MCF 10A (cell line): ENCODE measurements at regions of chr20 and their contacts with region 1.

Region 1: DNA sequence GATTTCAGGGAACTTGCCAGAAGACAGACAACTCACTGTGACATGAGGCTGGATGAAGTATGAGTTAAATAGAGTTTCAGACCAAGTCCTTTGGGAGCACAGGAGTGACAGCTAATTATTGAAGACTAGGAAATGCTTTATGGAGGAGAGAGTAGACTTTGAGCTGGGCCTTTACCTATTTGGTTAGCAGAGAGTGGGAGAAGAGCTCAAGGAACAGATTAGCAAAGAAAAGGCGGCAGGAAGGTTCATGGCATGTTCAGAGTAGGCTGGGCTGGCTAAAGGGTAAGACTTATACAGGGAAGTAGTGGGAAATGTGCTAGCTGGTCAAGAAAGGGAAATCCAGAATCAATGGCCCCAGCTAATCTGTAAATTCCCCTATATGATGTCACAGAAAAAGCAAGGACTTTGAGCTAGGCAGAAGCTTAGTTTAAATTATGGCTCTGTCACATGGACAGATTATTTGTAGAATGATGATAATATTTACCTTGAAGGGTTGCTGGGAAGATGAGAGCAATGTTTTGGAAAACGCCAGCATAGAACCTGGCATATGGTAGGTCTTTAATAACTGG is 19.0 kb downstream of the CEP250 start:
- DNase-seq: no peak
- H3K4me3 Mint-ChIP-seq: no peak overlapping the region
- H3K27ac Mint-ChIP-seq: no peak overlapping the region
- H3K4me1 Mint-ChIP-seq: no peaks in the 10 kb centered on the region
- H3K27me3 Mint-ChIP-seq: no peaks in the 10 kb centered on the region
- CTCF ChIP-seq: no peak

Region 2: DNA sequence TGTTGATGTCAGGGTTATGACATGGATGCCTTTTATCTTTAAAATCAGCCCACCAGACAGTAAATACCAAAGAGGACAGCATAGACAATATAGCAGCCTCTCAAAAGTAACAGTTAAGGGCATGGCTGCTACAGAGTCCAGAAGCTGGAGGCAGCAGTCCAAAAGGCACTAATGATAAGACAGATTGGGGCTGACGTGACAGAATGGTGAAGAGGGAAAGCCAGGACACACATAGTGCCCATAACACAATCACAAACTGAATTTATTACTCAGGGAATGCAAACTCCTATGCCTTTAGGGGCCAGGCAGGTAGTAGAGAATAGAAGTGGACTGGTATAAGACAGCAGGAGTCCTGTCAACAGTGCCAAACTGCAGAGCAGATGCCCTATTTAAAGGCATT is 729.5 kb before region 1 on chr20:
- CTCF ChIA-PET with region 1: no interaction called
- POLR2A ChIA-PET with region 1: no interaction called
- intact Hi-C with region 1: no loop called
- DNase-seq: no peak
- H3K4me3 Mint-ChIP-seq: no peak overlapping the region
- H3K27ac Mint-ChIP-seq: no peak overlapping the region
- H3K4me1 Mint-ChIP-seq: no peaks in the 10 kb centered on the region
- H3K27me3 Mint-ChIP-seq: no peaks in the 10 kb centered on the region
- CTCF ChIP-seq: no peak

Region 3: GRCh38 chr20:35463455-35464300 is 10.7 kb before region 1 on chr20:
- CTCF ChIA-PET with region 1: interaction called, 30 read pairs
- POLR2A ChIA-PET with region 1: interaction called, 3 read pairs
- intact Hi-C with region 1: no loop called
- DNase-seq: peak; percentile 66
- H3K4me3 Mint-ChIP-seq: no peak overlapping the region
- H3K27ac Mint-ChIP-seq: no peak overlapping the region
- H3K4me1 Mint-ChIP-seq: peaks cover 8% of the 10 kb centered on the region
- H3K27me3 Mint-ChIP-seq: no peaks in the 10 kb centered on the region
- CTCF ChIP-seq: peak; percentile 76

Region 4: GRCh38 chr20:35541783-35542588 is 67.6 kb after region 1 on chr20 and contains the start of gene ERGIC3:
- CTCF ChIA-PET with region 1: no interaction called
- POLR2A ChIA-PET with region 1: no interaction called
- intact Hi-C with region 1: no loop called
- DNase-seq: peak; percentile 95
- H3K4me3 Mint-ChIP-seq: peak within 1 kb of the TSS; percentile 91
- H3K27ac Mint-ChIP-seq: peak within 1 kb of the TSS; percentile 91
- H3K4me1 Mint-ChIP-seq: peaks cover 7% of the 10 kb centered on the region
- H3K27me3 Mint-ChIP-seq: no peaks in the 10 kb centered on the region
- CTCF ChIP-seq: no peak
- total RNA-seq, gene ERGIC3: 222 and 260 TPM in 2 replicates